ENCODE measurements at regions of chr9 and their contacts with region 1.

Region 1: DNA sequence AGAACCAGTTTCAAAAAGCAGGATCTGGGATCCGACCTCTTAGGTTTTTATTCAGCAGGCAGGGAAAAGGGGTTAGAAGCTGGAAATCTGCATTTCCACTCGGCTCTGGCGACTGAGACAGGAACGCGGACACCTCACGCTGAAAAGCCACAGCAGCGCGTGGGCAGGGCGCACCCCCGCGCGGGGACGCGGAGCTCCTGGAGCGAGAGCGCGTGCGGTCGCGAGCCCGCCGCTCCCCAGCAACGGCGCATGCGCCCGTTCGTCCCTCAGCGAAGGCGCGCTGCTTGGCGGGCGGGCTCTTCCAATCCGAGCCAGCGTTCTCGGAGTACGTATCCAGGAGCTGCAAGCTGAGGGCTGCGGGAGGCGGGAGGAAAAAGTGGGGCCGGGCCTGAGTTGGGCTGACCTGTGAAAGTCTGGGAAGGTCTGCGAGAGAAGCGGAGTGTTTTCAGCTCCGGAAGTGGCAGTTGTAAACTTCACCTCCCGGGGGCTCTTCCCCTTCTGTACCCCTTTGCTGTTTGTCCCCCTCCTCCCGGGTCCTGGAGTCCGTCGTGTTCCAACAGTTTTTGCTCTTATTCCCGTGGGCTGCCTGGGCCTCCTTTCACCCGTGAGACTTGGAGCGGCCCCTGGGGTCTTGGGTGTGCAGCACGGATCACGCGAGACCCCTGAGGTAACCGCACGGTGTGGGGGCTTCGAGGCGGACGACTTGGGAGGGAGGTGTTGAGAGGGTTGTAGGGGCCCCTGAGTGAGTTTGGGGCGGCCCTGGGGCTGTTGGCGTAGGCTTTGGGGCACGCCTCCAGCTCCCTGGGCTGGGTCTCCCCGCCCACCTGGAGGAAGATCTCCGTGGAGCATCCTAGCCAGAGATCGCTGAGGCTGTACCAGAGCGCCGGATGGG is at the start of gene CCDC171:
- DNase-seq: peak; percentile 93 to 94
- ATAC-seq: peak; percentile 97 to 99 (median 98)
- H3K4me3 ChIP-seq: peak within 1 kb of the TSS; percentile 48 to 88 (median 76)
- H3K27ac ChIP-seq: peak within 1 kb of the TSS in 9 of 10 donors; percentile 76 to 91 (median 85)
- H3K4me1 ChIP-seq: peaks cover 0 to 14% (median 9%) of the 10 kb centered on the region in 9 donors
- H3K27me3 ChIP-seq: no peaks in the 10 kb centered on the region
- CTCF ChIP-seq: no peak
- total RNA-seq, gene CCDC171: 1.2 to 2.4 (median 1.8) TPM

Region 2: DNA sequence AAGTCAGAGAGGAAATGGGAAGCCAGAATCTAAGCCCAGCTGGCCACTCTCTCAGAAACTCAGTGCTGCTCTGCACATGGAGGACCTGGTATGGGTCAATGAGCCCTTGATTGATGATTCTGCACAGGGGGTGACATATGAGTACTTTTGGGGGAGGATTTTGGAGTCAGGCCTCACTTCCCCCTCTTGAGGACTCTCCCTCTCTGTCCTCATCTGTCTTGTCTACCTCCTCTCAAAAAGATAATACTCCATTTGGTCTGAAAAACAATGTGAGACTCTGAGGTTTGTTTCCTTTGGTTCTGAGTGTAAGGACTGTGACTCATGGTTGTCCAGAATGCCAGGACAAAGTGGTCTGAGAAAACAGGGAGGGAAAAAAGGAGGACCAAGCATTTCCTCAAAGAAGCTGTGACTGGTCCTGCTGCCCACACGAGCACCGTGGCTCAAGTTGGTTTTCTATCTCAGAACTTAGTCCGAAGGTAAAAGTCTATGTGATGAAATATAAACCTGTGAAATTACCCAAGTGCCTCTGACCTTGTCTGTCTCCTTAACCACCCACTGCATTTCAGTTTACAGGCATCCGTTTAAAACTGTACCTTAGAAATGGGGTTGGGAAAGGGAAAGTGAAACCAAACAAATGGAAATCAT is 257.0 kb before region 1 on chr9:
- intact Hi-C with region 1: loop called in 1 of 10 experiments (anchors 10 kb)
- DNase-seq: no peak
- ATAC-seq: peak; percentile 25 to 78 (median 59)
- H3K4me3 ChIP-seq: peak overlapping the region in 9 of 10 donors; percentile 29 to 59 (median 48)
- H3K27ac ChIP-seq: peak overlapping the region; percentile 59 to 93 (median 84)
- H3K4me1 ChIP-seq: peaks cover 3 to 54% (median 16%) of the 10 kb centered on the region in 9 donors
- H3K27me3 ChIP-seq: no peaks in the 10 kb centered on the region
- CTCF ChIP-seq: no peak

Region 3: DNA sequence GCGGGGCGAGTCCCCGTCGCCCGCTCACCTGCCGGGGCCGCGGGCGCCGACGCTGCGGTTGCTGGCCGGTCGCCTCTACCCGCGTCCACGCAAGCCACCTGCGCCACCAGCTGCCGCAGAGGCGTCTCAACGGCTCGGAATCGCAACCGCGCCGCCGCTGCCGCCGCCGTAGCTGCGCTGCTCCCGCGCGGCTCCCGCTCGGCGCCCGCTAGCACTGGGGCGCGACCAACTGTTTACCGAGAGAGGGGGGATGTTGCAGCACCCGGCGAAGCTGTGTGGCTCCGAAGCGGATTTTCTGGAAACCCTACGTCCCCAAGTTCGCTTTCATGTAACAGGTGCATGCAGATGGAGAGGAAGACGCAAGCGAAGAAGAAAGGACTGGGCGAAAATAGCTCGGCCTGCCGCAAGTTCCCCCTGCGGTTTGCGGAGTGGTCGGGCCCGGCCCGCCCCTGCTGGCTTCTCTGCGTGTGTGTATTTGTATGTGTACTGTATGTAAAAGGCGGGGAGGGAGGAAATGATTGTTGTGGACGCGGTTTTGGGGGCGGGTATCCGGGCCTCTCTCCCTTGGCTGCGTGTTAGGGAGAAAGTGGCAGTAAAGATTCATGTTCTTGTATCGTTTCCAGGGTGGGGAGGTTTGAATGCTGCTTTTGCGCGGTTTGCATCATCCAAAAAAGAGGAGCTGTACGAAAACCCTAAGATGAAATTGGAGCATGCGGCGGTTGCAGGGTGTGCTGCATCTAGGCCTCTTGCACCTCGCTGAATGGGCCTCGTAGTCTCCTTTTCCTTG is 41.9 kb before region 1 on chr9 and contains the start of gene PSIP1:
- intact Hi-C with region 1: loop called in 2 of 10 experiments (anchors 1 to 5 kb)
- DNase-seq: peak; percentile 81
- ATAC-seq: peak; percentile 92 to 97 (median 94)
- H3K4me3 ChIP-seq: peak within 1 kb of the TSS; percentile 69 to 98 (median 96)
- H3K27ac ChIP-seq: peak within 1 kb of the TSS; percentile 87 to 98 (median 94)
- H3K4me1 ChIP-seq: peaks cover 0 to 32% (median 18%) of the 10 kb centered on the region in 9 donors
- H3K27me3 ChIP-seq: no peaks in the 10 kb centered on the region
- CTCF ChIP-seq: peak in 2 of 9 donors; percentile 11 to 16
- total RNA-seq, gene PSIP1: 16.3 to 31.7 (median 21.3) TPM

Measured in heart right ventricle (tissue), 16 donors.